PC-3 (cell line): ENCODE measurements at regions of chr17 and their contacts with region 1.

Region 1: GRCh38 chr17:73192894-73193701 is at the start of gene COG1:
- DNase-seq: peak; percentile 94
- ATAC-seq: peak; percentile 67
- H3K4me3 ChIP-seq: peak within 1 kb of the TSS; percentile 82
- H3K27ac ChIP-seq: peak within 1 kb of the TSS; percentile 83
- H3K4me1 ChIP-seq: peaks cover 17% of the 10 kb centered on the region
- H3K27me3 ChIP-seq: no peaks in the 10 kb centered on the region
- CTCF ChIP-seq: no peak
- total RNA-seq, gene COG1: 24.1 and 31.6 TPM in 2 replicates

Region 2: DNA sequence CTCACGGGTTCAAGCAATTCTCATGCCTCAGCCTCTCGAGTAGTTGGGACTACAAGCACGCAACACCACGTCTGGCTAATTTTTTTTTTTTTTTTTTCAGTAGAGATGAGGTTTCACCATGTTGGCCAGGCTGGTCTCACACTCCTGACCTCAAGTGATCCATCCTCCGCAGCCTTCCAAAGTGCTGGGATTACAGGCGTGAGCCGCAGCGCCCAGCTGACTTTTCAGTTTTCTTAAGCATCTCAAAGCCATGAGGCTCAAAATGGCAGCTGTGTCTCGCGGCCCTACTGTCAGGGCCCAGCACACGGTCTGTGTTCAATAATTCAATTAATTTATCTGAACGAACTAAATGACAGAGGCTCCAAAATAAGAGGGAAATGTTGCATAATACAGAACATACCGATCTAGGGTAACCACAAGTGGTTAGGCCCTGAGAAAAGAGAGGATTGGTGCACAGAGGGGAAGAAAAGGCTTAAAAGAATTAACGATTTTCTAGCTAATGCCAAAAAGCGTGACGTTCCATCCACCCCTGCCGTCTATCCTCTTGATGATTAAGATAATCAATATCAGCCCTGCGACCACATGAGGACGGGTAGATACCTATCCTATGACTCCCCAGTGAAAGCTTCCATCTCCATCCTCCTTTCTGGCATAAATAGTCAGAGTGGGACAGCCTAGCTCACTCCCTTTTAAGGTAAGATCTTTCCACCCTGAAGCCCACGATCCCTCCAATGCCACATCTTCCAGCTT is 237.5 kb before region 1 on chr17:
- CTCF ChIA-PET with region 1: no interaction called
- POLR2A ChIA-PET with region 1: no interaction called
- intact Hi-C with region 1: no loop called
- DNase-seq: no peak
- ATAC-seq: no peak
- H3K4me3 ChIP-seq: no peak overlapping the region
- H3K27ac ChIP-seq: no peak overlapping the region
- H3K4me1 ChIP-seq: no peaks in the 10 kb centered on the region
- H3K27me3 ChIP-seq: no peaks in the 10 kb centered on the region
- CTCF ChIP-seq: no peak

Region 3: GRCh38 chr17:73007407-73007806 is 185.7 kb before region 1 on chr17:
- CTCF ChIA-PET with region 1: no interaction called
- POLR2A ChIA-PET with region 1: interaction called, 3 read pairs
- intact Hi-C with region 1: loop called (anchors 1 kb)
- DNase-seq: no peak
- ATAC-seq: no peak
- H3K4me3 ChIP-seq: no peak overlapping the region
- H3K27ac ChIP-seq: no peak overlapping the region
- H3K4me1 ChIP-seq: peaks cover 7% of the 10 kb centered on the region
- H3K27me3 ChIP-seq: no peaks in the 10 kb centered on the region
- CTCF ChIP-seq: no peak

Region 4: DNA sequence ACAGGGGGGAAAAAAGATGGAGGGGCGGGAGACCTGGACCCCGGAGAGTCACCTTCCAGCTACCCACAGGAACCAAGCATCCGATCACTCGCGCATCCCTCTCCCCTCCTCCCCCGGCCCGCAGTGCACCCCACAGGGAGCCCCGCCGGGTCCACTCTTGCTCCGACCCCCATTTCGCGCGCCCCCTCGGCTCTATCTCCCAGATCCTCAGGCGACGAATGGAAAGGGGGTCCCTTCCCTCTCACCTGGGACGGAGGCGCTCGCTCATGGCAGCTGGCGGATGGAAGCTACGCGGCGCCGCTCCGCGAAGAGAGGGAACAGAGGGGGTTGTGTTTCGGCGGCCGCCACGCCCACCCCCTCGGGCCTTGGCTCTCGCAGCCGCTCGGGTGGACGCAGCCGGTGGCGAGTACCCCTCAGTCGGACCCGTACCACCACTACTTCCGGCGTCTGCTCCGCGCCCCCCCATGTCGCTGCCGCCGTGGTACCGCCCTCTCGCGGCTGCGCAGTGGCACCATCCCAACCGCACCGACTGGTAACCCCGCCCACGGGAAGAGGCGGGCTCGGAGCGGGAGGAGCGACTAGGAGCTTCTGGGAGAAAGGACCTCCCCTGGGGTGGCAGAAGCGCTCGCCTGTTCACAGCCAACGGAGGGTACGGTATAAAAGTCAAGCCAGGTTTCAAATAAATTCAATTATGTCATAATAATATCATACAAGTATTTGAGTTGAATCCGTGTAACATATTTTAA is 38.9 kb after region 1 on chr17:
- CTCF ChIA-PET with region 1: interaction called, 3 read pairs
- POLR2A ChIA-PET with region 1: no interaction called
- intact Hi-C with region 1: loop called (anchors 2 kb)
- DNase-seq: peak; percentile 98
- ATAC-seq: peak; percentile 83
- H3K4me3 ChIP-seq: peak overlapping the region; percentile 80
- H3K27ac ChIP-seq: peak overlapping the region; percentile 39
- H3K4me1 ChIP-seq: peaks cover 41% of the 10 kb centered on the region
- H3K27me3 ChIP-seq: no peaks in the 10 kb centered on the region
- CTCF ChIP-seq: no peak

Region 5: GRCh38 chr17:73255671-73256181 is 62.6 kb after region 1 on chr17:
- CTCF ChIA-PET with region 1: interaction called, 3 read pairs
- POLR2A ChIA-PET with region 1: no interaction called
- intact Hi-C with region 1: loop called (anchors 2 kb)
- DNase-seq: peak; percentile 78
- ATAC-seq: peak; percentile 92
- H3K4me3 ChIP-seq: no peak overlapping the region
- H3K27ac ChIP-seq: no peak overlapping the region
- H3K4me1 ChIP-seq: no peaks in the 10 kb centered on the region
- H3K27me3 ChIP-seq: no peaks in the 10 kb centered on the region
- CTCF ChIP-seq: peak; percentile 100

Region 6: DNA sequence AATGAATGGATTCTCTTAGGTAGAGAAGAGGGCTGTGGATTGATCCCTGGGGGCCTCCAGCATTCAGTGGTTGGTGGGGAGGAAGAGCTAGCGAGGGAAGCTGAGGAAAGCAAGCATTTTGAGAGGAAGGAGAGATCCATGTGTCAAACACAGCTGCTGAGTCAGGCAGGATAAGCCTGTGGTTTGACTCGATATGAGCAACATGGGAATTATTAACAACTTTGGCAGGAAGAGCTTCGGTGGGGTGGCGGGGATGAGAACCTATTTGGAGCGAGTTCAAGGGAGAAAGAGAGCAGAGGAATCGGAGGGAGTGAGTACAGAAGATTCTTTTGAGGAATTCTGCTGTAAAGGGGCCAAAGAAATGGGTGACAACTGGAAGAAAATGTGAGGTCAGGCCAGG is 178.2 kb after region 1 on chr17:
- CTCF ChIA-PET with region 1: interaction called, 4 read pairs
- POLR2A ChIA-PET with region 1: no interaction called
- intact Hi-C with region 1: loop called (anchors 1 kb)
- DNase-seq: peak; percentile 90
- ATAC-seq: peak; percentile 61
- H3K4me3 ChIP-seq: no peak overlapping the region
- H3K27ac ChIP-seq: peak overlapping the region; percentile 15; the same call in 1 of the 2 replicates
- H3K4me1 ChIP-seq: peaks cover 10% of the 10 kb centered on the region
- H3K27me3 ChIP-seq: no peaks in the 10 kb centered on the region
- CTCF ChIP-seq: no peak

Region 7: GRCh38 chr17:73429440-73430164 is 236.5 kb after region 1 on chr17:
- CTCF ChIA-PET with region 1: no interaction called
- POLR2A ChIA-PET with region 1: no interaction called
- intact Hi-C with region 1: no loop called
- DNase-seq: peak; percentile 90
- ATAC-seq: peak; percentile 93
- H3K4me3 ChIP-seq: no peak overlapping the region
- H3K27ac ChIP-seq: no peak overlapping the region
- H3K4me1 ChIP-seq: peaks cover 4% of the 10 kb centered on the region; the same call in 1 of the 2 replicates
- H3K27me3 ChIP-seq: 0 out of 2 replicates have a peak, but pooled peaks cover 4% of the 10 kb centered on the region
- CTCF ChIP-seq: peak; percentile 99